Activated naive CD4-positive, alpha-beta T cell treated with anti-CD3 and anti-CD28 coated beads for 36 hours (primary cell): ENCODE measurements at regions of chr5 and their contacts with region 1.

Region 1: DNA sequence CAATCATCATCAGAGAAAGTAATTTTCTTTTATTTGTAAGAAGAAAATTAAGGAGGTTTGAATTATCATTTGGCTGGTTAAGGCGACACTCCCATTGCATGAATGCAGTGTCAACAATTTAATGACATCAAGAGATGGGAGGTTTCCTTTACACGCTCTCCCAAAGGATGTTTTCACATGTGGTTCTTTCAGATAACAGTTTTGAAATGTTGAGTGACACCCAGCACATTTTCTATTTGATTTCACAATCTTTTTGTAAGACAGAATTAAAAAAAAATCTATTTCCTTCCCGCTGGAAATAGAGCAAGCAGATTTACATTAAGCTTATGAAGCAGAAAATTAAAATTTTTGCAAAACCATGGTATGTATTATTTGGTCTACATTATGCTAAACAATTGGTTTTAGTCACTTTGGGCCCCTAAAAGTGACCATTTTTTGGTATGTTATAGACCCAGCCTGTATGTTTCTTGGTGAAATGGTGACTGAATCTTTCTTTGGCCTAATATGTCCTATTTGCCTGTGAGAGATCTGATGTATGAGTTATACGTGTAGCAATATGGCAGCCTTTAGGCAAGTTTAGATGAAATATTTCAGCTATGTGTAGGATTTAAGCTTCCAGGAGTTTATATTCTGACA is 18.9 kb upstream of the ANKRD55 start:
- DNase-seq: no peak
- H3K4me3 Mint-ChIP-seq: no peak overlapping the region
- H3K27ac Mint-ChIP-seq: no peak overlapping the region
- H3K4me1 Mint-ChIP-seq: peaks cover 2% of the 10 kb centered on the region
- H3K27me3 Mint-ChIP-seq: no peaks in the 10 kb centered on the region

Region 2: GRCh38 chr5:56050551-56051255 is 201.3 kb before region 1 on chr5:
- CTCF ChIA-PET with region 1: no interaction called
- intact Hi-C with region 1: no loop called
- DNase-seq: no peak
- H3K4me3 Mint-ChIP-seq: peak overlapping the region; percentile 10
- H3K27ac Mint-ChIP-seq: peak overlapping the region; percentile 52
- H3K4me1 Mint-ChIP-seq: peaks cover 61% of the 10 kb centered on the region
- H3K27me3 Mint-ChIP-seq: no peaks in the 10 kb centered on the region

Region 3: DNA sequence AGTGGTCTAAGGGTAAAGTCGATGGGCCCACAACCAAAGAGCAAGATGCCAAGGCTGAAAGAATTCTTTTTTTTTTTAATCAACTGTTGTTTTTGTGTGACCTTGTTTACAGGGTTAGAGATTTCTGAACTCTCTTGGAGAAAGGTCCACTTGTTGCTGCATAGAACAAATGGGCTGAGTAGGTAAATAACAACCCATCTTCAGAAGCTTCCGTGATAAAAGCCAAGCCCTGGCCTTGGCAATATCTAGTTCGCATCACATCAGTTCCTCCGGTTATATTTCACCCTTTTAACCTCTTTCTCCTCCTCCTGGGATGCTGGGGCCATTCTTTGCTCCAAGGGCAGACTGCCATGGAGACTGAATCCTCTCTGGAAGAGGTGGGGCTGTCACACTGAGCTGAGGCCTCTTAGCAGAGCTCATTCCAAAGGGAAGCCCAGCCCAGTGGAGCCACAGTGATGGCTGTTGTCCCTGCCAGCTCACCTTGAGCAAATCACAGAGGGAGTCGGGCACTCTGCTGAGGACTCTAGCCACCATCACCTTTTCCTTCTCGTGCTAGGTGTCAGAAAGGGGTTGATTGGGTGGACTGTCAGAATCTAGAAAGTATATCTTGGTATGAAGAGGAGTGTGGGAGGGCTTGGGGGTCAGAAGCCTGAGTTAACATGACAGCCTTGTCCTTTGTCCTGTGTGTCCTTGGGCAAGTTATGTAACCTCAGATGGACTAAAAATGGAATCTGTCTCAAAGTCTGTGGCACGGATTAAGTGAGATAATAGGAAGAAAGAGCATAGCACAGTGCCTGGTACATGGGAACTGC is 36.8 kb before region 1 on chr5:
- CTCF ChIA-PET with region 1: no interaction called
- intact Hi-C with region 1: loop called (anchors 5 kb)
- DNase-seq: no peak
- H3K4me3 Mint-ChIP-seq: no peak overlapping the region
- H3K27ac Mint-ChIP-seq: no peak overlapping the region
- H3K4me1 Mint-ChIP-seq: peaks cover 7% of the 10 kb centered on the region
- H3K27me3 Mint-ChIP-seq: no peaks in the 10 kb centered on the region